Activated CD8-positive, alpha-beta T cell treated with anti-CD3 and anti-CD28 coated beads for 36 hours (primary cell): ENCODE measurements at regions of chr14 and their contacts with region 1.

Region 1: DNA sequence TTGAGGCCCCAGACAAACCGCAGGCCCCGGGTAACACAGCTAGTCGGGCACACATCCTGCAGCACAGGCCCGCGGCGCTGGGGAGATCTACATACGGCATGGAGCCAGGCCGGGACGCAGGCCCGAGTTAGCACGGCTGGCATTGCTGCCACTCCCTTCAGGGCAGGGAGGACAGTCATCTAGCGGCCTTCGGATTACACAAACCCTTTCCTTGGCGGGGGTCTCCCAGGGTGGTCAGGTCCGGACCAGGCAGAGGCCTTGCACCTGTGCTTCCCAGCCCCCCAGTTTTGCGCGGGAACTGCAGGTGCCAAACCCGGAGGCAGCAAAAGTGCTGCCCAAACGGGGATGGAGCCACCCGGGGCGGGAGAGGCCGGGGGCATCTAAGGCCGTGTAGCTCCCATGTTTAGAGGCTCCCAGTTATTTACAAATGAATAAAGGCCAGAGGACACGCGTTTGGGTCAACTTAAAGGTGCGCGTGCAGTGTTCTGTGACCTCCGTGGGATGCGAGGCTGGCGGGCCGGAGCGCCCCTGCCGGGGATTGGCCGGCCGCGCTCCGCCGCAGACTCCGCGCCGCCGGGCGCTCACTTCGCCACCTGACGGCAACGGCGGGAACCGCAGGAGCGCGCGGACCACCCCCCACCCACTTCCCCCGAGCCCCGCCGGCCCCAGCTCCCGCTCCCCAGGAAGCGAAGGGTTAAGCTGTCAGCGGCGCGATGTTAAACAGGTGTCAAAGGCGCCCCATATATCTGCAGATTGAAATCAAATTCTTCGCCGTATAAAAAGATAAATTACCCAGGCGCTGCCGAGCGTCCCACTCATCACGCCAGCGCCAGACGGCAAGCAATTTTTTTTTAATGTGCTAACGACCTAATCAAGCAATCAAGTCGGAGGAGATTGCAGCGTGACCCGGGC is 18.1 kb downstream of the VSX2 start:
- DNase-seq: peak; percentile 61
- ATAC-seq: peak; percentile 95
- H3K4me3 Mint-ChIP-seq: peak overlapping the region; percentile 74
- H3K27ac Mint-ChIP-seq: peak overlapping the region; percentile 16
- H3K4me1 Mint-ChIP-seq: peaks cover 7% of the 10 kb centered on the region
- H3K27me3 Mint-ChIP-seq: peaks cover 5% of the 10 kb centered on the region
- CTCF ChIP-seq: peak; percentile 99

Region 2: GRCh38 chr14:74109369-74109768 is 148.0 kb before region 1 on chr14:
- CTCF ChIA-PET with region 1: interaction called, 11 read pairs
- POLR2A ChIA-PET with region 1: no interaction called
- intact Hi-C with region 1: loop called (anchors 5 kb)
- DNase-seq: no peak
- ATAC-seq: no peak
- H3K4me3 Mint-ChIP-seq: no peak overlapping the region
- H3K27ac Mint-ChIP-seq: no peak overlapping the region
- H3K4me1 Mint-ChIP-seq: no peaks in the 10 kb centered on the region
- H3K27me3 Mint-ChIP-seq: no peaks in the 10 kb centered on the region
- CTCF ChIP-seq: no peak

Region 3: DNA sequence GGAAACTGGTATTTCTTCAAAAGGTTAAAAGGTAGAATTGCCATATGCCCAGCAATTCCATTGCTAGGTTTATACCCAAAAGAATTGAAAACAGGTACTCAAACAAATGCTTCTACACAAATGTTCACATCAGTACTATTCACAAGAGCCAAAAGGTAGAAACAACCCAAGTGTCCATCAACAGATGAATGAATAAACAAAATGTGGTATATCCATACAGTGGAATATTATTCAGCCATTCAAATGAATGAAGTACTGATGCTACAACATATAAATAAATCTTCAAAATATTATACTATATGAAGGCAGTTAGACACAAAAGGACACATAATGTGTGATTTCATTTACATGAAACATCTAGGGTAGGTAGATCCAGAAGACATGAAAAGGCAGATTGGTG is 131.0 kb before region 1 on chr14:
- CTCF ChIA-PET with region 1: no interaction called
- POLR2A ChIA-PET with region 1: no interaction called
- intact Hi-C with region 1: no loop called
- DNase-seq: no peak
- ATAC-seq: no peak
- H3K4me3 Mint-ChIP-seq: no peak overlapping the region
- H3K27ac Mint-ChIP-seq: no peak overlapping the region
- H3K4me1 Mint-ChIP-seq: no peaks in the 10 kb centered on the region
- H3K27me3 Mint-ChIP-seq: no peaks in the 10 kb centered on the region
- CTCF ChIP-seq: no peak

Region 4: GRCh38 chr14:74217672-74218448 is 39.5 kb before region 1 on chr14:
- CTCF ChIA-PET with region 1: interaction called, 11 read pairs
- POLR2A ChIA-PET with region 1: interaction called, 4 read pairs
- intact Hi-C with region 1: no loop called
- DNase-seq: peak; percentile 82
- ATAC-seq: peak; percentile 98
- H3K4me3 Mint-ChIP-seq: peak overlapping the region; percentile 21
- H3K27ac Mint-ChIP-seq: no peak overlapping the region
- H3K4me1 Mint-ChIP-seq: no peaks in the 10 kb centered on the region
- H3K27me3 Mint-ChIP-seq: peaks cover 10% of the 10 kb centered on the region
- CTCF ChIP-seq: peak; percentile 93

Region 5: DNA sequence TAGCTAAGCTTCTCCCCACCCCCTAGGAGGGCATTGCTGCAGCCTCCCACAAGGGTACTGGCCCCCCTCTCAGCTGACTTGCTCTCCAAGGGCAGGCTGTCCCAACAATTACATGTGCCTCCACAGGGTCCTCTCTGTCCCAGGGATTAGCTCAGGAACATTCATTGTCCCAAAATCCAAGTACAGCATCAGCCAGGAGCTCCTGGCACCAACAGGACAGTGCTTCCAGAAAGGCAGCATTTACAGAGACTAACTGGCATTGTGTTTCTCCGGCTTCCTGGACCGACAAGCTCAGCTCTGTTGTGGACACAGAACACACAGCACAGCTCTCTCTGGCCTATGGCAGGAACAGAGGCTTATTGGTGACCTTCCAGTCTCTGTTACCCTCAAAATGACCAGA is 23.7 kb after region 1 on chr14:
- CTCF ChIA-PET with region 1: no interaction called
- POLR2A ChIA-PET with region 1: no interaction called
- intact Hi-C with region 1: no loop called
- DNase-seq: no peak
- ATAC-seq: no peak
- H3K4me3 Mint-ChIP-seq: no peak overlapping the region
- H3K27ac Mint-ChIP-seq: no peak overlapping the region
- H3K4me1 Mint-ChIP-seq: no peaks in the 10 kb centered on the region
- H3K27me3 Mint-ChIP-seq: no peaks in the 10 kb centered on the region
- CTCF ChIP-seq: no peak